Ascending aorta (tissue), 2 donors: ENCODE measurements at regions of chr6 and their contacts with region 1.

Region 1: GRCh38 chr6:75230484-75231325 is 12.9 kb downstream of the COX7A2 start:
- DNase-seq: no peak
- H3K4me3 ChIP-seq: peak overlapping the region in 1 of 2 donors; percentile 21
- H3K27ac ChIP-seq: no peak overlapping the region
- H3K4me1 ChIP-seq: peaks cover 0 to 4% of the 10 kb centered on the region in 2 donors
- H3K27me3 ChIP-seq: no peaks in the 10 kb centered on the region
- CTCF ChIP-seq: peak; percentile 49 to 76 (median 73)

Region 2: GRCh38 chr6:75213732-75214131 is 17.0 kb before region 1 on chr6:
- intact Hi-C with region 1: loop called (anchors 2 kb)
- DNase-seq: no peak
- H3K4me3 ChIP-seq: no peak overlapping the region
- H3K27ac ChIP-seq: no peak overlapping the region
- H3K4me1 ChIP-seq: peaks cover 0 to 10% of the 10 kb centered on the region in 2 donors
- H3K27me3 ChIP-seq: no peaks in the 10 kb centered on the region
- CTCF ChIP-seq: no peak